ENCODE measurements at regions of chr14 and their contacts with region 1.

Region 1: GRCh38 chr14:73663548-73664212 is 18.9 kb downstream of the DNAL1 start:
- DNase-seq: peak; percentile 81
- ATAC-seq: peak; percentile 69
- H3K4me3 ChIP-seq: no peak overlapping the region
- H3K27ac ChIP-seq: peak overlapping the region; percentile 31
- H3K4me1 ChIP-seq: peaks cover 25% of the 10 kb centered on the region
- H3K27me3 ChIP-seq: no peaks in the 10 kb centered on the region
- CTCF ChIP-seq: no peak
- EP300 ChIP-seq: peak in 1 of 2 experiments; percentile 15; a peak in 1 of 4 replicates
- POLR2A ChIP-seq: no peak
- RAD21 ChIP-seq: no peak

Region 2: GRCh38 chr14:73696466-73697400 is 33.1 kb after region 1 on chr14:
- CTCF ChIA-PET with region 1: no interaction called
- POLR2A ChIA-PET with region 1: no interaction called
- in situ Hi-C with region 1: no loop called
- intact Hi-C with region 1: no loop called
- DNase-seq: peak; percentile 10
- ATAC-seq: no peak
- H3K4me3 ChIP-seq: no peak overlapping the region
- H3K27ac ChIP-seq: no peak overlapping the region
- H3K4me1 ChIP-seq: peaks cover 15% of the 10 kb centered on the region
- H3K27me3 ChIP-seq: no peaks in the 10 kb centered on the region
- CTCF ChIP-seq: no peak
- EP300 ChIP-seq: no peak
- POLR2A ChIP-seq: no peak
- RAD21 ChIP-seq: no peak

Region 3: DNA sequence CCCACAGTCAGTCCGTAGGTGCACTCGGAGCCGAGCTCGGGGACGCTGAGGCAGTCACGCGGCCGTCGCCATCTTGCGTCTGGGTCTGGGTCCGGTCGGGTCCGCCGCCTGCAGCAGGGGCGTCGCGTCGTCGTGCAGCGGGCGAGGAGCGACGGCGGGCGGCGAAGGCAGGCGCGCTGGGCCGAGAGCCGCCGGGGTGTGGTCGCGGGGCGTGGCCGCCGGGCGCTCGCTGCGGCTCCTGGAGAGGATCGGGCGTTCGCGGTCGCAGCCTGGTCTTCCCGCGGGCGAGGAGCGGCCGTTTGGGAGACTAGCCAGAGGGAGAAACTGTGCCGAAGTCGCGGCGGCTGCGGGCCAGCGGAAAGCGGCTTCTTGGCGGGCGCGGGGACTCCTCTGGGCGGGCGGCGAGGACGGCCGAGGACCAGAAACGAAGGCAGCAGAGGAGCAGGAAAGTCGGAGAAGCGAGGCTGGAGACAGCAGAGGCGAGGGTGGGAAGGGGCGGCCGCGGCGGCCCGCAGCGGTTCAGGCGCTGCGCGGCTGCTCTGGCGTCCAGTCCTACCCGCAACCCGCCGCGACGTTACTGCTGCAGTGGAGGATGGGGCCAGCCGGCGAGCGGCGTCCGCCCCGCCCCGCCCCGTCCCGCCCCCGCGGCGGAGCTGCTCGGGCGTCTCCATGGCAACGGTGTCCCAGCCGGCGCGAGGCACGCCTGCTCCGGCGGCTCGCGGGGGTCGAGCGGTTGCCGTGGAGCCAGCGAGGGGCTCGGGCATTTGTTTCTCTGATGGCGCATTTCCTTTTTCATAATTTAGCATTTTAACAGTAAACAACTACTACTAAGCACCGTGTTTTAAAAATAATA is 50.3 kb after region 1 on chr14 and contains the start of gene PNMA1:
- CTCF ChIA-PET with region 1: no interaction called
- POLR2A ChIA-PET with region 1: no interaction called
- in situ Hi-C with region 1: no loop called
- intact Hi-C with region 1: loop called (anchors 2 kb)
- DNase-seq: peak; percentile 69
- ATAC-seq: peak; percentile 82
- H3K4me3 ChIP-seq: peak within 1 kb of the TSS; percentile 79 to 89 (median 81)
- H3K27ac ChIP-seq: peak within 1 kb of the TSS; percentile 69
- H3K4me1 ChIP-seq: peaks cover 15% of the 10 kb centered on the region
- H3K27me3 ChIP-seq: no peaks in the 10 kb centered on the region
- CTCF ChIP-seq: peak; percentile 19; the same call in 1 of the 2 replicates
- EP300 ChIP-seq: no peak
- POLR2A ChIP-seq: peak; percentile 63 to 80; a peak in 3 of 4 replicates
- RAD21 ChIP-seq: peak; percentile 31; the same call in 1 of the 2 replicates
- total RNA-seq, gene PNMA1: 8.3 and 10.7 TPM in 2 replicates

Region 4: DNA sequence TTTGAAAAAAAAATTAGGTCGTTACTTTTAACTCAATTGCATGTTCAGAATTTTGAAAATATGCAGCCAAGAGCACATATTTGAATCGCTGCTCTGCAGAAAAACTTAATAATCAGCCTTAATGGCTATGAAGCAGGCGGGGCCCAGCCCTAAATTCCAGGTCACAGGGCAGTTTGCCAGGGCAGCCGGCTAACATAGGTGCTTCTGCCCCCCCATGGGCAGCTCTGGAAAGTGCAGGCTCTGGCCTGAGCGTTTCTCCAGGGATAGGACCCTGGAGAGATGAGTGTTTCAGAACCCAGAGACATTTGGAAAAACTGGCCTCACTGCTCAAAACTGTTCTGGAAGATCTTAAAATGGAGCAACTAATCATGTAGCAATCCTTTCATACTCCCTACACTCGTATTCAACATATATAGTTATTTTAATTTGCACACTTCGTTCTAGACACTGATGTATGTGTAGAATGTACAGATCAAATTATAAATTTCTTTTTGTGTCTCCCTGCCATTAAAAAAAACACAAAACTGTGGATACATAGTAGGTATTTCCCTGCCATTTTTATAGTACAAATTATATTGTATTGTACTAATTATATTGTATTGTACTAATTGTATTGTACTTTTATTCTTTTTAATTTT is 162.0 kb after region 1 on chr14:
- CTCF ChIA-PET with region 1: no interaction called
- POLR2A ChIA-PET with region 1: no interaction called
- in situ Hi-C with region 1: no loop called
- intact Hi-C with region 1: no loop called
- DNase-seq: peak; percentile 69
- ATAC-seq: peak; percentile 92
- H3K4me3 ChIP-seq: no peak overlapping the region
- H3K27ac ChIP-seq: no peak overlapping the region
- H3K4me1 ChIP-seq: peaks cover 15% of the 10 kb centered on the region
- H3K27me3 ChIP-seq: peaks cover 0 to 2% of the 10 kb centered on the region in 2 experiments; a peak in 2 of 5 replicates
- CTCF ChIP-seq: peak; percentile 90
- EP300 ChIP-seq: no peak
- POLR2A ChIP-seq: no peak
- RAD21 ChIP-seq: peak; percentile 94